Naive thymus-derived CD4-positive, alpha-beta T cell (primary cell): ENCODE measurements at regions of chr11 and their contacts with region 1.

Region 1: GRCh38 chr11:64240394-64241174 is at the start of gene FKBP2:
- DNase-seq: peak; percentile 97 to 99 (median 98)
- ATAC-seq: peak; percentile 78
- H3K4me3 ChIP-seq: peak within 1 kb of the TSS; percentile 73
- H3K4me3 Mint-ChIP-seq: peak within 1 kb of the TSS; percentile 80 to 95 (median 89)
- H3K27ac ChIP-seq: peak within 1 kb of the TSS; percentile 99
- H3K27ac Mint-ChIP-seq: peak within 1 kb of the TSS; percentile 97 to 100 (median 99)
- H3K4me1 ChIP-seq: peaks cover 24 to 28% of the 10 kb centered on the region in 2 donors
- H3K4me1 Mint-ChIP-seq: peaks cover 9 to 46% (median 31%) of the 10 kb centered on the region in 7 donors
- H3K27me3 ChIP-seq: no peaks in the 10 kb centered on the region
- H3K27me3 Mint-ChIP-seq: no peaks in the 10 kb centered on the region
- total RNA-seq, gene FKBP2: 20.3 to 46.6 (median 33.5) TPM

Region 2: GRCh38 chr11:64165849-64166635 is 74.5 kb before region 1 on chr11 and contains the start of gene MACROD1:
- CTCF ChIA-PET with region 1: no interaction called
- POLR2A ChIA-PET with region 1: no interaction called
- intact Hi-C with region 1: loop called in 1 of 2 experiments (anchors 2 kb)
- DNase-seq: peak; percentile 52 to 87 (median 65)
- ATAC-seq: peak; percentile 95
- H3K4me3 ChIP-seq: peak within 1 kb of the TSS; percentile 74
- H3K4me3 Mint-ChIP-seq: peak within 1 kb of the TSS; percentile 85 to 94 (median 90)
- H3K27ac ChIP-seq: peak within 1 kb of the TSS; percentile 66
- H3K27ac Mint-ChIP-seq: peak within 1 kb of the TSS; percentile 51 to 83 (median 78)
- H3K4me1 ChIP-seq: peaks cover 0 to 5% of the 10 kb centered on the region in 2 donors
- H3K4me1 Mint-ChIP-seq: peaks cover 7 to 22% (median 16%) of the 10 kb centered on the region in 7 donors
- H3K27me3 ChIP-seq: no peaks in the 10 kb centered on the region
- H3K27me3 Mint-ChIP-seq: no peaks in the 10 kb centered on the region
- total RNA-seq, gene MACROD1: 5.4 to 12.4 (median 8.7) TPM

Region 3: DNA sequence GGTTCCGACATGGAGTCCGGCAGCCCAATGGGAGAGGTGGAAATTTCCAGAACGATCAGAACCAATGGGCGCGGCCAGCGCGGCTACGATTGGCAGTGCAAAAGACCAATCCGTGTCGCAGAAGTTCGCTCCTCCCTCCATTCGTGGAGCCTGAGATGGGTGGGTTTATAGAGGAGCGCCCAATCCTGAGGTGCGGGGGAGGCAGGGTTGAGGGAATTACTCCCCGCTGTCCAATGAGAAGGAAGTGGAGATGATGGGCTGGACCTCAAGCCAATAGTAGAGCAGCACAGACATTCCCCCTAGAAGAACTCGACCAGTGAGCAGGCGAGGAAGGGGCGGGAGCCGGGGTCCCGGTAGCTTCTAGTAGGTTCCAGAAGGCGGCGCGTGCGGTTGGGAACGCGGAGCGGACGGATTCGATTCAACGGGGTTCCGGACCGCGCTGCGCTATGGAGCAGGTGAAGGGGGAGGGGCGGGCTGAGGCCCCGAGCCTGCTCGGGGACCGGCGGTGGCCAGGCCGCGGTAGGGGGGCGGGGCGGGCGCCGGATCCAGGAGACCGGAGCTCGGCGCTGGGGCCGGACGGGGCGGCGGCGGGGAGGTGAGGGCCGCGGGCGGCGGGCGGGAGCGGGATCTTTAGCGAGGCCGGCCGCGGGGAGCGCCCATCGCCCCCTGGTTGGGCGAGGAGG is 54.6 kb before region 1 on chr11 and contains the start of gene STIP1:
- CTCF ChIA-PET with region 1: no interaction called
- POLR2A ChIA-PET with region 1: no interaction called
- intact Hi-C with region 1: loop called (anchors 1 to 2 kb)
- DNase-seq: peak; percentile 87 to 100 (median 99)
- ATAC-seq: peak; percentile 92
- H3K4me3 ChIP-seq: peak within 1 kb of the TSS; percentile 84
- H3K4me3 Mint-ChIP-seq: peak within 1 kb of the TSS in 9 of 10 donors; percentile 88 to 99 (median 96)
- H3K27ac ChIP-seq: peak within 1 kb of the TSS; percentile 82
- H3K27ac Mint-ChIP-seq: peak within 1 kb of the TSS in 7 of 9 donors; percentile 89 to 99 (median 92)
- H3K4me1 ChIP-seq: peaks cover 11 to 28% of the 10 kb centered on the region in 2 donors
- H3K4me1 Mint-ChIP-seq: peaks cover 19 to 58% (median 46%) of the 10 kb centered on the region in 7 donors
- H3K27me3 ChIP-seq: no peaks in the 10 kb centered on the region
- H3K27me3 Mint-ChIP-seq: peaks cover 0 to 6% (median 0%) of the 10 kb centered on the region in 5 donors
- total RNA-seq, gene STIP1: 45.1 to 243 (median 88.8) TPM

Region 4: DNA sequence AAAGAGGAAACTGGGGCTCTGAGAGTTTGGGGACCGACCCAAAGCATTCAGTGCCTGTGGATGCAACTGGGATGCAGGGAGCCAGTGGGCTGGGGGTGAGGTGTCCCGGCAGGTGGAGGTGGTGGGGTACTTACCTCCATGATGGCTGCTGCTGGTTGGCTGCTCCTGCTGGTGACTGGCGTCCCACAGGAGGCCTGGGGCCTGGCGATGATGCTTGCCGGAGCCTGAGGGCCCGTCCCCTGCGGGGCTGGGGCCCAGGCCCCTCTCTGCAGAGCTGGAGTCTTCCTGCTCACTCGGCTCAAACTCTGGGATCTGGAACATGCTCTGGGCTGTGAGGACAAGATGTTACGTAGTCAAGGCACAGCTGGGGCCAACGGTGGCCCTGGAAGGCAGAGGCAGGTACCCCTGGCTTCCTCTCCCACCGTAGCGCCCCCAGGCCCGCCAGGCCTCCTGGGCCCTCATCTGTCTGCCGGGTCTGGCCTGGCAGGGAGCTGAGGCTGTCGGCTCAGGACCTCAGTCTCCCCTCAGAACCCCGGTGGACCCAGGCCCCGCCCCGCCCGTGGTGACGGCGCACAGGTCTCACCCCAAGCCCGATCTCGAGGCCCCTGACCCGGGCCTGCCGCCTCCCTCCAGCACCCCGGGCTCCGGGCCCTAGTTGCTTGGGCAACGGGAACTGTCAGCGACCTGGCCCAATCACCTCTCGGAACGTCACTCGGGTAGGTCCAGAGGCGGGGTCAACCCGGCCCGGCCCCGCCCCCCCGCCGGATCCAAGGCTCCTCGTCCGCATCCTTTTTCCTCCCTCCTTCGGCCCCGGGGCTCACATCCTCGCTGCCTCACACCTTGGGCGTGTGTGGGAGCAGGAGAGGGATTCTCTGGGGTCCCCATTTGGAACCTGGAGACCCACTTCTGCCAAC is 43.7 kb after region 1 on chr11 and contains the start of gene BAD:
- CTCF ChIA-PET with region 1: no interaction called
- POLR2A ChIA-PET with region 1: interaction called, 14 read pairs
- intact Hi-C with region 1: loop called (anchors 1 to 2 kb)
- DNase-seq: peak; percentile 77 to 92 (median 87)
- ATAC-seq: peak; percentile 87
- H3K4me3 ChIP-seq: peak within 1 kb of the TSS; percentile 100
- H3K4me3 Mint-ChIP-seq: peak within 1 kb of the TSS; percentile 84 to 93 (median 89)
- H3K27ac ChIP-seq: peak within 1 kb of the TSS; percentile 99
- H3K27ac Mint-ChIP-seq: peak within 1 kb of the TSS; percentile 81 to 98 (median 95)
- H3K4me1 ChIP-seq: peaks cover 11 to 17% of the 10 kb centered on the region in 2 donors
- H3K4me1 Mint-ChIP-seq: peaks cover 8 to 25% (median 18%) of the 10 kb centered on the region in 7 donors
- H3K27me3 ChIP-seq: no peaks in the 10 kb centered on the region
- H3K27me3 Mint-ChIP-seq: no peaks in the 10 kb centered on the region
- total RNA-seq, gene BAD: 17.5 to 41.1 (median 22.7) TPM

Region 5: DNA sequence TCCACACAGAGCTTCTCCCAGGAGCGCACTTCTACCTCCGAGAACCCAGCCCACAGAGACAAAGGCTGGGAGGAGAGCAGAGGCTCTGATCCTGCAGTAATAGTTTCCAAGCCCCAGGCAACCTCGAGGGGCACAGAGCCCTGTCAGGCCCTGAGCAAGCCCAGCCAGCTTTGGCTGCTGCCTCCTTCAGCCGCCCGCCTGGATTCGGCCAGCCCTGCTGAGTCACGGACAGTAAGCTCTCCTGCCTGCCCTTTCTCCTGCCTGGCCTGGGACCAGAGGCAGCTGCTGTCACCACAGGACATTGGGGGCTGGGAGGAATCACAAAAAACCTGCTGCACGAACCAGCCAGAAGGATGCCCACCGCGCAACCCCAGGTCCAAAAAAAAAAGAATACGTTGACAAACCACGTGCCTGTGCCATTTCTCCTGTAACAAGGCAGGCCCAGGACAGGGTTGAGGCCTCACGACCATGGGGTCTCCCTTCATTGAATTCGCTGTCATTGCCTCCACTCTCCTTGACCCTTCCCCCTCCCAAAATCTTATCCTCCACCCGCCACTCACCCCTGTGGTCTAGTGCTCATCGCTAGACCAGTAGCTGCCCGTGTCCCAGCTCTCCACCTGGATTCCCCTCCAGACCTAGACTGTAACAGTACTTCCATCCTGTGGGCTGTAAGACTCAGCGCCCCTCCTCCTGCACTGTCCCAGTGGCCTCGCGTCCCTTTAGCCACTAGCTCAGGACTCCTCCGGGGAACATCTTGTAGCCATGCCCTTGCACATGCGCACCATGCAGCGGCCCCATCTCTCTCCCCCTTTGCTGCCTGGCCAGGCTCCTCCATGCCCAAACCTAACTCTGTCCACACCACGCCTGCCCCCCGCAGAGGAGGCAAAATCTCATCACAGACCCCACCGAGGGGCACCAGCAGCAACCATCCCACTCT is 343.0 kb after region 1 on chr11:
- CTCF ChIA-PET with region 1: no interaction called
- POLR2A ChIA-PET with region 1: no interaction called
- intact Hi-C with region 1: no loop called
- DNase-seq: no peak
- ATAC-seq: no peak
- H3K4me3 ChIP-seq: no peak overlapping the region
- H3K4me3 Mint-ChIP-seq: no peak overlapping the region
- H3K27ac ChIP-seq: no peak overlapping the region
- H3K27ac Mint-ChIP-seq: no peak overlapping the region
- H3K4me1 ChIP-seq: no peaks in the 10 kb centered on the region
- H3K4me1 Mint-ChIP-seq: peaks cover 0 to 1% (median 0%) of the 10 kb centered on the region in 7 donors
- H3K27me3 ChIP-seq: no peaks in the 10 kb centered on the region
- H3K27me3 Mint-ChIP-seq: peaks cover 7 to 17% (median 11%) of the 10 kb centered on the region in 5 donors

Region 6: DNA sequence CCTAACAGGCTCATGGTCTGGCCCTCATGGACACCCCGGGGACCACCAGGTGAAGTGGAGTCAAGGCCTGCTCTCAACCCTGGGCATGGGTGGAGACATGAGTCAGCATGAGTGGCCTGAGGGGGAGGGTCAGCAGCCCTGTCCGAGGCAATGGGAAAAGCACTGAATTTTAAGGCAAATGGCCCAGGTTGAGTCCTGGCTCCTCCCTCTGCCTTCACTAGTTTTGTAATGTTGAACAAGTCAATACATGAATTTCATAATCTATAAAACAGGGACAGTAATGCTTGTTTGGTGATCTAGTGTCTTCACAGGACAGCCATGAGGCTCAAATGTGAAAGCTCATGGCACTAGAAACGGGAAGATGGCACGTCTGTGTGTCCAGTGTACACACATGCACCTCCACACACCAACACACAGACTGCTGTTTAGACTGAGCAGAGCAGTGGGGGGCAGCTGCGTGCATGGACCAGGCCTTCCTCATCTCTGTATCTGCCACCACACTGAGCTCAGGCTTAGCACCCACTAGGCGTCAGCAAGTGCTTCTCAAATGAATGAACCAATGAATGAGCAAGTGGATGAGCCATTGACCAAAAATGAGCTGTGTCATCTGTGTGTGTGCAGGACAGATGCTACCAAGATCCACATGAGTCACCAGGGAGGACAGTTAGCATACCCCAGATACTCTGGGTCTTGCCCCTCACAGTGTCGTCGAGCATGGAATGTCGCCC is 419.0 kb after region 1 on chr11:
- CTCF ChIA-PET with region 1: no interaction called
- POLR2A ChIA-PET with region 1: no interaction called
- intact Hi-C with region 1: no loop called
- DNase-seq: no peak
- ATAC-seq: peak; percentile 64
- H3K4me3 ChIP-seq: no peak overlapping the region
- H3K4me3 Mint-ChIP-seq: no peak overlapping the region
- H3K27ac ChIP-seq: no peak overlapping the region
- H3K27ac Mint-ChIP-seq: no peak overlapping the region
- H3K4me1 ChIP-seq: no peaks in the 10 kb centered on the region
- H3K4me1 Mint-ChIP-seq: peaks cover 0 to 11% (median 0%) of the 10 kb centered on the region in 7 donors
- H3K27me3 ChIP-seq: no peaks in the 10 kb centered on the region
- H3K27me3 Mint-ChIP-seq: peaks cover 0 to 4% (median 0%) of the 10 kb centered on the region in 5 donors